WTC11 (cell line): ENCODE measurements at regions of chr1 and their contacts with region 1.

Region 1: DNA sequence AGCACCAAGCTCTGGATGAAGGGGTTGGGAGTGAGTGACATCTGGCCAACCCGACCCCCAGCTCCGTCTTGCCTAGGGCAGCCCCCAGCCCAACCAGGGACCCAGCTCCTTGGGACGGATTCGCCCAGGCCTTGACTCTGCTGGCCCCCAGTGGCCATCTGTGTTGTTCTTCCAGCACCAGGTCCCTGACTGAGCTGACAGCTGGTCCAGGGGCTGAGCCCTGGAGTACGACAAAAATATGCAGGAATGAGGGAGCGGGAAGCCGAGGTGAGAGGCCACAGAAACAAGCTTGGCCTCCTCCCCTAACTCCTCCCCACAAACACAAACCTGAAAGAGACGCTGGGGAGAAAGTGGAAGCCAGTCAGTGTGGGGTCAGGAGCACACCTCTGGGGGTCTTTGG is 55.0 kb upstream of the PAX7 start:
- DNase-seq: peak; percentile 94
- ATAC-seq: peak; percentile 95
- H3K4me3 Mint-ChIP-seq: no peak overlapping the region
- H3K27ac Mint-ChIP-seq: no peak overlapping the region
- H3K4me1 Mint-ChIP-seq: peaks cover 9% of the 10 kb centered on the region
- H3K27me3 Mint-ChIP-seq: peaks cover 2% of the 10 kb centered on the region; the same call in 1 of the 2 replicates
- CTCF ChIP-seq: peak; percentile 77

Region 2: GRCh38 chr1:17661546-17662157 is 914.0 kb before region 1 on chr1:
- CTCF ChIA-PET with region 1: interaction called, 10 read pairs
- POLR2A ChIA-PET with region 1: no interaction called
- DNase-seq: peak; percentile 88
- ATAC-seq: peak; percentile 76
- H3K4me3 Mint-ChIP-seq: no peak overlapping the region
- H3K27ac Mint-ChIP-seq: peak overlapping the region; percentile 74
- H3K4me1 Mint-ChIP-seq: peaks cover 11% of the 10 kb centered on the region
- H3K27me3 Mint-ChIP-seq: no peaks in the 10 kb centered on the region
- CTCF ChIP-seq: peak; percentile 97

Region 3: DNA sequence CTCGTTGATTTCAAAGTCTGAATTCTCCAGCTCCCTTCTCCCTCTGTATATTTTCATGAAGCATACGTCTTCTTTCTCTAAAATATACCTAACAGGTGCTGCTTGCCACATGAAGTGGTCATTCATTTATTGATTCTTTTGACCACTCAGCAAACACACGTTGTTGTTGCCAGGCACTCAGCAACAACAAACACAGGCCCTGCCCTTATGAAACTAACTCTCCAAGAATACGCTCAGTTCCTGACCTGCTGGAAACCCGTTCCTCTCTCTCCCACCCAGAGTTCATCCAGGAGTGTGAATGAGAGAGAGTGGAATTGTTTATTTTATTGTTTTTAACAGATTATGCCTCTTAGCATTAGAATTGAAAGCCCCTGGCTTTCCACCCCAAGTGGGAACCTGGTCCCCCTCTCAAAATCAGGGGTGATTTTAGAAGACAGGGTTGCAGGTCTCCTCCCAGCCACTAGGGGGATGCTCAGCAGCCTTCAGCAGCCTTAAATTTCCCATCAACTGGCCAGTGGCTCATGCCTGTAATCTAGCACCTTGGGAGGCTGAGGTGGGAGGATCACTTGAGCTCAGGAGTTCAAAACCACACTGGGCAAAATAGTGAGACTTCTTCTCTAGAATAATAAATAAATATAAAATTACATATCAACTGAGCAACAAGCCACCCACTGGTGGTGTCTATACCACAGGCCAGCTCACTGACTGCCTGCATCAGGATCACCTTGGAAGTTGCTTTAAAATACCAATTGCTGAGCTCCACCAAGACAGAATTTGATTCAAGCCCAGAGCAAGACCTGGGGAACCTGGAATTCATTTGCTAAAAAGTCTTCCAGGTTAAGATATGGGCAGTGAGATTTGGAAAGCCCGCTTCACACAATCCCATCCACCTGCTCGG is 275.9 kb before region 1 on chr1:
- CTCF ChIA-PET with region 1: interaction called, 37 read pairs
- POLR2A ChIA-PET with region 1: no interaction called
- DNase-seq: peak; percentile 52
- ATAC-seq: peak; percentile 4; the same call in 1 of the 2 replicates
- H3K4me3 Mint-ChIP-seq: no peak overlapping the region; the same call in 1 of the 2 replicates
- H3K27ac Mint-ChIP-seq: peak overlapping the region; percentile 95
- H3K4me1 Mint-ChIP-seq: peaks cover 53% of the 10 kb centered on the region
- H3K27me3 Mint-ChIP-seq: no peaks in the 10 kb centered on the region
- CTCF ChIP-seq: peak; percentile 92

Region 4: GRCh38 chr1:18385239-18385790 is 190.3 kb before region 1 on chr1:
- CTCF ChIA-PET with region 1: interaction called, 10 read pairs
- POLR2A ChIA-PET with region 1: no interaction called
- DNase-seq: peak; percentile 44
- ATAC-seq: peak; percentile 85
- H3K4me3 Mint-ChIP-seq: peak overlapping the region; percentile 0; the same call in 1 of the 2 replicates
- H3K27ac Mint-ChIP-seq: peak overlapping the region; percentile 0; the same call in 1 of the 2 replicates
- H3K4me1 Mint-ChIP-seq: peaks cover 30% of the 10 kb centered on the region
- H3K27me3 Mint-ChIP-seq: peaks cover 49% of the 10 kb centered on the region
- CTCF ChIP-seq: no peak

Region 5: GRCh38 chr1:18470671-18471355 is 104.8 kb before region 1 on chr1:
- CTCF ChIA-PET with region 1: interaction called, 10 read pairs
- POLR2A ChIA-PET with region 1: no interaction called
- DNase-seq: no peak
- ATAC-seq: no peak
- H3K4me3 Mint-ChIP-seq: no peak overlapping the region
- H3K27ac Mint-ChIP-seq: no peak overlapping the region; the same call in 1 of the 2 replicates
- H3K4me1 Mint-ChIP-seq: peaks cover 36% of the 10 kb centered on the region
- H3K27me3 Mint-ChIP-seq: peaks cover 16% of the 10 kb centered on the region
- CTCF ChIP-seq: no peak

Region 6: GRCh38 chr1:18532390-18533170 is 43.0 kb before region 1 on chr1:
- CTCF ChIA-PET with region 1: interaction called, 20 read pairs
- POLR2A ChIA-PET with region 1: no interaction called
- DNase-seq: no peak
- ATAC-seq: no peak
- H3K4me3 Mint-ChIP-seq: no peak overlapping the region
- H3K27ac Mint-ChIP-seq: no peak overlapping the region
- H3K4me1 Mint-ChIP-seq: no peaks in the 10 kb centered on the region
- H3K27me3 Mint-ChIP-seq: peaks cover 68% of the 10 kb centered on the region
- CTCF ChIP-seq: no peak

Region 7: GRCh38 chr1:18597160-18598042 is 21.8 kb after region 1 on chr1:
- CTCF ChIA-PET with region 1: interaction called, 18 read pairs
- POLR2A ChIA-PET with region 1: no interaction called
- DNase-seq: peak; percentile 88
- ATAC-seq: peak; percentile 91
- H3K4me3 Mint-ChIP-seq: no peak overlapping the region
- H3K27ac Mint-ChIP-seq: no peak overlapping the region
- H3K4me1 Mint-ChIP-seq: peaks cover 12% of the 10 kb centered on the region
- H3K27me3 Mint-ChIP-seq: peaks cover 22% of the 10 kb centered on the region
- CTCF ChIP-seq: peak; percentile 91

Region 8: DNA sequence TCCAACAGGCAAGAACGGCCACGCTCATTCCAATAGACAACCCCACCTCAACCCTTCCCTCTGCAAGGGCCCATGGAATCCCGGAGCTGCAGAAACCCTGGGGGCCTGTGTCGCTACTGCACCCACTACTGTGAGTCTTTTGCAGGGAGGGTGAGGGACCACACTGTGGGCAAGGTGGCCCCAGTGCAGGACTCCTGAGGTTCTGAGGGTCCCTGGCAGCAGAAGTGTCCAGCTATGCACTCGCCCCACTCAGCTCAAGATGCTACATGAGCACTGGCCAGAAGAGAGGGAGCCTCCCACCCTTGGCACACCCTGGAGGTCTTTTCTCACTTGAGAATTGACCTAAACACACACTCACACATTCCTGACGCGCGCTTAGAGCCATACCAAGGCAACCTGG is 52.9 kb after region 1 on chr1:
- CTCF ChIA-PET with region 1: no interaction called
- POLR2A ChIA-PET with region 1: no interaction called
- DNase-seq: no peak
- ATAC-seq: no peak
- H3K4me3 Mint-ChIP-seq: no peak overlapping the region
- H3K27ac Mint-ChIP-seq: no peak overlapping the region
- H3K4me1 Mint-ChIP-seq: peaks cover 53% of the 10 kb centered on the region
- H3K27me3 Mint-ChIP-seq: peaks cover 99% of the 10 kb centered on the region
- CTCF ChIP-seq: no peak